MCF 10A (cell line): ENCODE measurements at regions of chr3 and their contacts with region 1.

Region 1: DNA sequence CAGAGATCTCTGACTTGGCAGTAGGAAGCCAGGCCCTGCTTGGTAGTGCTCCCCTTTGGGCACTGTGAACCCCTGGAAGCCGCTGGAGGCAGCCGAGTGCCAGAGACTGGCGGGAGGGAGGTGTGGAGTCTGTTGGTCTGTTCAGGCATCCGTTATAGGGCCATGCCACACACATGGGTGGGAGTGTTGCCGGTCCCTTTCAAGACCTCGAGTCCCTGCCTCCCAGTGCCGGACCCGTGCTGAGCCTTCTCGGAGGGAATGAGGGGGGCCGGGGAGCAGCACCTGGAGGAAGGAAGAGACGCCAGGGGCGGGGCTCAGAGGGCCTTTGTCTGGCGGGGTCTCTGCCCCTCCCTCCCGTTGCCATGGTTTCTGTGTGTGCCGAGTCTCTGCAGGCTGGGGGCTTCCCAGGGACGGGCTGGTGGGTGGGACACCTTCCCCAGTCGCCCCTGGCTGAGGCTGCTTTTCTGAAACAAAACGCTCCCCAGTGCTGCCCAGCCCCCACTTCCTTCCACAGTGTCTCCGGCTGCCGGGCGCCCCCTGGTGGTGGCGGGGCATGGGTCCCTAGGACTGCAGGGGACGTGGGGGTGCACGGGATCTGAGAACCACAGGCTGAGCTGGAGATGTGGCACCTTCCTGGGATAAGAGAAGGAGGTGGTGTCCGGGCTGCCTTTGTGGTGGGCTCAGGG is 10.0 kb downstream of the GNAI2 start:
- DNase-seq: peak; percentile 91
- H3K4me3 Mint-ChIP-seq: peak overlapping the region; percentile 55
- H3K27ac Mint-ChIP-seq: peak overlapping the region; percentile 91
- H3K4me1 Mint-ChIP-seq: peaks cover 54% of the 10 kb centered on the region
- H3K27me3 Mint-ChIP-seq: no peaks in the 10 kb centered on the region
- CTCF ChIP-seq: peak; percentile 98

Region 2: DNA sequence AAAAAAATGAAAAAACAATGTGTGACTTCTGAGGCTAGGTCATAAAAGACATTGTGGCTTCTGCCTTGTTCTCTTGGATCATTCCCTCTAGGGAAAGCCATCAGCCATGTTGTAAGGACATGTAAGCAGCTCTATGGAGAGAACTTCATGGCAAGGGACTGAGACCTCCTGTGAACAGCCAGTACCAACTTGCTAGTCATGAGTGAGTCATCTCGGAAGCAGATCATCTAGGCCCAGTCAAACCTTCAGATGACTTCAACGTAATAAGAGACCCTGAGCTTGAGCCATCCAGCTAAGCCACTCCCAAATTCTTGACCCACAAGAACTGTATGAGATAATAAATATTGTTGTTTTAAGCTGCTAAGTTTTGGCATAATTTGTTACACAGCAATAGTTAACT is 321.3 kb before region 1 on chr3:
- CTCF ChIA-PET with region 1: no interaction called
- POLR2A ChIA-PET with region 1: no interaction called
- intact Hi-C with region 1: no loop called
- DNase-seq: peak; percentile 81
- H3K4me3 Mint-ChIP-seq: no peak overlapping the region
- H3K27ac Mint-ChIP-seq: peak overlapping the region; percentile 69
- H3K4me1 Mint-ChIP-seq: peaks cover 12% of the 10 kb centered on the region
- H3K27me3 Mint-ChIP-seq: no peaks in the 10 kb centered on the region
- CTCF ChIP-seq: no peak

Region 3: GRCh38 chr3:50100956-50101845 is 144.8 kb before region 1 on chr3:
- CTCF ChIA-PET with region 1: no interaction called
- POLR2A ChIA-PET with region 1: no interaction called
- intact Hi-C with region 1: no loop called
- DNase-seq: no peak
- H3K4me3 Mint-ChIP-seq: no peak overlapping the region
- H3K27ac Mint-ChIP-seq: no peak overlapping the region
- H3K4me1 Mint-ChIP-seq: no peaks in the 10 kb centered on the region
- H3K27me3 Mint-ChIP-seq: no peaks in the 10 kb centered on the region
- CTCF ChIP-seq: no peak

Region 4: GRCh38 chr3:50260027-50260941 is 14.3 kb after region 1 on chr3:
- CTCF ChIA-PET with region 1: interaction called, 33 read pairs
- POLR2A ChIA-PET with region 1: interaction called, 7 read pairs
- intact Hi-C with region 1: no loop called
- DNase-seq: peak; percentile 85
- H3K4me3 Mint-ChIP-seq: peak overlapping the region; percentile 62
- H3K27ac Mint-ChIP-seq: peak overlapping the region; percentile 63
- H3K4me1 Mint-ChIP-seq: no peaks in the 10 kb centered on the region
- H3K27me3 Mint-ChIP-seq: no peaks in the 10 kb centered on the region
- CTCF ChIP-seq: peak; percentile 98

Region 5: DNA sequence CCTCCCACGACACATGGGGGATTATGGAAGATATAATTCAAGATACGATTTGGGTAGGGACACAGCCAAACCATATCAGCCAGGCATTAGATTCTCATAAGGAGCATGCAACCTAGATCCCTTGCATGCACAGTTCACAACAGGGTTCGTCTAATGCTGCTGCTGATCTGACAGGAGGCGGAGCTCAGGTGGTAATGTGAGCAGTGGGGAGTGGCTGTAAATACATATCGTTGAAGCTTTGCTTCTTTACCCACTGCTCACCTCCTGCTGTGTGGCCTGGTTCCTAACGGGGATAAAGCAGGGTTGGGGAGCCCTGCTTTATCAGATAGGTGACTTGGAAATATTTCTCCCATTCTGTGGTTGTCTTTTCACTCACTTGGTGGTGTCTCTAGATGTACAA is 443.6 kb after region 1 on chr3:
- CTCF ChIA-PET with region 1: no interaction called
- POLR2A ChIA-PET with region 1: no interaction called
- intact Hi-C with region 1: no loop called
- DNase-seq: no peak
- H3K4me3 Mint-ChIP-seq: no peak overlapping the region
- H3K27ac Mint-ChIP-seq: no peak overlapping the region
- H3K4me1 Mint-ChIP-seq: no peaks in the 10 kb centered on the region
- H3K27me3 Mint-ChIP-seq: peaks cover 18% of the 10 kb centered on the region
- CTCF ChIP-seq: no peak